Right cardiac atrium (tissue), 5 donors: ENCODE measurements at regions of chr7 and their contacts with region 1.

Region 1: GRCh38 chr7:95545078-95545498 is 51.2 kb downstream of the PDK4 start:
- DNase-seq: no peak
- ATAC-seq: peak; percentile 82 to 90
- H3K4me3 ChIP-seq: peak overlapping the region; percentile 88
- H3K27ac ChIP-seq: no peak overlapping the region
- H3K4me1 ChIP-seq: peaks cover 4% of the 10 kb centered on the region
- H3K27me3 ChIP-seq: no peaks in the 10 kb centered on the region

Region 2: GRCh38 chr7:95476904-95477594 is 68.0 kb before region 1 on chr7:
- intact Hi-C with region 1: no loop called
- DNase-seq: peak; percentile 53 to 81 (median 56)
- ATAC-seq: peak; percentile 68 to 70
- H3K4me3 ChIP-seq: no peak overlapping the region
- H3K27ac ChIP-seq: no peak overlapping the region
- H3K4me1 ChIP-seq: no peaks in the 10 kb centered on the region
- H3K27me3 ChIP-seq: no peaks in the 10 kb centered on the region

Region 3: GRCh38 chr7:95590387-95591248 is 45.5 kb after region 1 on chr7:
- intact Hi-C with region 1: loop called in 3 of 4 experiments (anchors 5 kb)
- DNase-seq: peak in 1 of 3 donors; percentile 28
- ATAC-seq: peak; percentile 12 to 62
- H3K4me3 ChIP-seq: peak overlapping the region; percentile 66
- H3K27ac ChIP-seq: peak overlapping the region; percentile 57
- H3K4me1 ChIP-seq: peaks cover 3% of the 10 kb centered on the region
- H3K27me3 ChIP-seq: no peaks in the 10 kb centered on the region

Region 4: GRCh38 chr7:95596198-95597063 is 51.3 kb after region 1 on chr7 and contains the start of gene PDK4:
- intact Hi-C with region 1: loop called in 3 of 4 experiments (anchors 5 kb)
- DNase-seq: peak; percentile 97 to 99 (median 97)
- ATAC-seq: peak; percentile 95 to 98
- H3K4me3 ChIP-seq: peak within 1 kb of the TSS; percentile 66
- H3K27ac ChIP-seq: peak within 1 kb of the TSS; percentile 87
- H3K4me1 ChIP-seq: no peaks in the 10 kb centered on the region
- H3K27me3 ChIP-seq: no peaks in the 10 kb centered on the region
- total RNA-seq, gene PDK4: 53.0 to 842 (median 103) TPM

Region 5: DNA sequence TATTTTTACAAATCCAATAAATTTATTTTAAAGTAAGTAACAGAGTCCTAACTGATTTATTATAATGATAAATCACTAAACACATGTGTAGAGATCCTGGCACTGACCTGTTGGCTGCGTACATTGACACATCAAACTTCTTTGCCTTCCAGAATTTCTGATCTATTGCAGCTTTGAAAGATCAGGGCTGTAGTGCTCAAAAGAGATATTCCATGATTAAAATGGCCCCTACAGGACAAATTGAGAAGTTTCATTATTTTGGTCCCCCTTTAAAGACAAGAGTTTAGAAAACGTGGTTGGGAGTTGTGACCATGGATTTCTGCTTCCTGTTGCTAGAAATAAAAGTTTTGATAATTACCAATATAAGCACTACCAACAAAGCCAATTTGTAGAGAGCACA is 138.9 kb after region 1 on chr7:
- intact Hi-C with region 1: loop called in 3 of 4 experiments (anchors 5 kb)
- DNase-seq: no peak
- ATAC-seq: peak; percentile 46 to 74
- H3K4me3 ChIP-seq: no peak overlapping the region
- H3K27ac ChIP-seq: no peak overlapping the region
- H3K4me1 ChIP-seq: no peaks in the 10 kb centered on the region
- H3K27me3 ChIP-seq: no peaks in the 10 kb centered on the region